ENCODE measurements at regions of chr1 and their contacts with region 1.

Region 1: GRCh38 chr1:229186373-229187056 is 84.4 kb upstream of the RAB4A start:
- DNase-seq: peak; percentile 19
- H3K4me3 Mint-ChIP-seq: no peak overlapping the region
- H3K27ac Mint-ChIP-seq: no peak overlapping the region
- H3K4me1 Mint-ChIP-seq: peaks cover 15% of the 10 kb centered on the region
- H3K27me3 Mint-ChIP-seq: peaks cover 20% of the 10 kb centered on the region

Region 2: DNA sequence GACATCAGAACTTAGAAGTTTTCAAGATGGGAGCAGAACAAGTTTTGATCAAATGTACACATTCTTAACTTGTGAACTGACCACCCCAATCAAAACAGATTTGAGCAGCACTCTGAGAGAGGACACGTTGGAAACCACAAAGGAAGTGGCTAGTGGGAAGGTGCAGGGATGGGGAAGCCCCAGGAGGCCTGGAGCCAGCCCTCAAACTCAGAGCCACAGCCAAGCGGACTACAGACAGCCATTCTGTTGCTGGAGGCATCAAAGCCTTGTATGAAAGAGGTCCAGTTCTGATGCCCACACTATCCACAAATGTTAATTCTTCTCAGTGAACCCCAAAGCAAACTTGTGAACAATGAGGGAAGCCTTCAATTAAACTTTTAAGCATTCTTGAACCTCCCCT is 59.2 kb before region 1 on chr1:
- intact Hi-C with region 1: loop called (anchors 2 kb)
- DNase-seq: peak; percentile 20
- H3K4me3 Mint-ChIP-seq: no peak overlapping the region
- H3K27ac Mint-ChIP-seq: no peak overlapping the region
- H3K4me1 Mint-ChIP-seq: peaks cover 35% of the 10 kb centered on the region
- H3K27me3 Mint-ChIP-seq: peaks cover 54% of the 10 kb centered on the region

Measured in activated T-helper 1 cell treated with anti-CD3 and anti-CD28 coated beads, Interleukin-12 subunit alpha, Interleukin-12 subunit beta, Interleukin-2, Interleukin-4 antibody, amounts not matched to agents 30 ng/mL and 10 ng/mL and 1 ng/mL, durations not matched to agents 14 hours and 24 hours and 36 hours (primary cell).